ENCODE measurements at regions of chr12 and their contacts with region 1.

Region 1: DNA sequence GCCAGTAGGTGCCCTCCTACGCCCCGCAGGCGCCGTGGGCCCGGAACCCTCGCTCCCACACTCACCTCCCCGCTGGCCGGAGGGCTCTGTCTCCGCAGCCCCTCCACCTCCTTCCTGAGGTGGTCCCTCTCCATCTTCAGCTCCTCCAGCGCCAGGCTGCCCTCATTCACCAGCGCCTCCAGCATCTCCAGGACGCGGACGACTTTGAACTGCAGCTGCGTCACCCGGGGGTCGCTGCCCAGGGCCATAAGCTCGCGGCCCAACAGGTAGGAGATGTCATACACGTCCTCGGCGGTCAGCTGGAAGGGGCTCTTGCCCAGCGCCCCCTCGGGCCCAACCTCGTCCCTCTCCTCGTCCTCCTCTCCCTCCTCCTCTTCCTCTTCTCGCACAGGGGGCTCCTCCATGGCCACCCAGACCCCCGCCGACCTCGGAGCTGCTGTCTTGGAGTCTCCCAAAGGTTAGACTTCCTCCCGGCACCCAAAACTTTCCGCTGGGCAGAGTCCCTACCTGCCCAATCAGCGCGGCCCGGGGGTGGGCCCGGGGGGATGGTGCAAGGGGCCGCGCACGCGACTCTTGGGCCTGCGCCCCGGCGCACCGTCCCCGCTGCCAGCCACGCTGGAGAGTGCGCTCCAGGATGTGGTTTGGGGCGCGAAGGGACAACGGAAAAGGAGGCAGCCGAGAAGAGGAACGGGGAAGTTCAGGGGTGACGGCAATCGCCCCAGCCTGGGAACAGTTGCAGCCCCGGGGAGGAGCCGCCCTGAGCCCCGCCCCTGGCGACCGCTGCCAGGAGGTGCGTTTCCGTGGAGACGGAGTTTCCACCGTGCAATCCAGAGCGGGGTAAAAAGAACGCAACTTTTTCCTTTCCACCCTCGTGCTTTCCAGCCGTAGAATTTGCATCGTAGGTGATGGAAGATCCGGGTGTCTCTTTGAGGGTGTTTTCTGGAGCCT is at the start of gene RILPL2:
- DNase-seq: no peak
- ATAC-seq: peak; percentile 98
- H3K4me3 ChIP-seq: peak within 1 kb of the TSS; percentile 71 to 95
- H3K27ac ChIP-seq: peak within 1 kb of the TSS; percentile 77
- H3K4me1 ChIP-seq: no peaks in the 10 kb centered on the region
- H3K27me3 ChIP-seq: no peaks in the 10 kb centered on the region
- CTCF ChIP-seq: no peak
- total RNA-seq, gene RILPL2: 5.4 TPM

Region 2: GRCh38 chr12:123344086-123344485 is 92.2 kb before region 1 on chr12:
- CTCF ChIA-PET with region 1: no interaction called
- POLR2A ChIA-PET with region 1: no interaction called
- in situ Hi-C with region 1: no loop called
- intact Hi-C with region 1: no loop called
- DNase-seq: no peak
- ATAC-seq: no peak
- H3K4me3 ChIP-seq: no peak overlapping the region
- H3K27ac ChIP-seq: no peak overlapping the region
- H3K4me1 ChIP-seq: no peaks in the 10 kb centered on the region
- H3K27me3 ChIP-seq: no peaks in the 10 kb centered on the region
- CTCF ChIP-seq: no peak

Region 3: DNA sequence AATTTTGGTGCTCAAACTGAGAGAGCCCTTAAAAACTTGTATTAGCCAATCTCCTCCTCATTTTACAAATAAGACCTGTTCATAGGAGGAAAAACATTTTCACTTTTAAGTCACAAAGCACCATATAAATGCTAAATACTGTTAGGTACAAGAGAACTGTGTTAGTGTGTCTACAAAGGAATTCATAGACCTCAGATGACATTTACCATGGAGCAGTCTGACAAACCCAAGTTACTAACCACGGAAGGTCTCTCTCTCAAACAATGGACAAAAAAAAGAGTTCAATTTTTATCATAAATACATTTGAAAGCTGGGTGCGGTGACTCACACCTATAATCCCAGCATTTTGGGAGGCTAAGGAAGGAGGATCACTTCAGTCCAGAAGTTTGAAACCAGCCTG is 81.7 kb before region 1 on chr12:
- CTCF ChIA-PET with region 1: no interaction called
- POLR2A ChIA-PET with region 1: interaction called, 17 read pairs
- in situ Hi-C with region 1: no loop called
- intact Hi-C with region 1: no loop called
- DNase-seq: no peak
- ATAC-seq: no peak
- H3K4me3 ChIP-seq: no peak overlapping the region
- H3K27ac ChIP-seq: no peak overlapping the region
- H3K4me1 ChIP-seq: peaks cover 12% of the 10 kb centered on the region; the same call in 1 of the 2 replicates
- H3K27me3 ChIP-seq: no peaks in the 10 kb centered on the region
- CTCF ChIP-seq: no peak

Region 4: GRCh38 chr12:123398550-123399254 is 37.6 kb before region 1 on chr12:
- CTCF ChIA-PET with region 1: no interaction called
- POLR2A ChIA-PET with region 1: no interaction called
- in situ Hi-C with region 1: no loop called
- intact Hi-C with region 1: no loop called
- DNase-seq: no peak
- ATAC-seq: peak; percentile 23; the same call in 1 of the 2 replicates
- H3K4me3 ChIP-seq: no peak overlapping the region
- H3K27ac ChIP-seq: no peak overlapping the region
- H3K4me1 ChIP-seq: no peaks in the 10 kb centered on the region
- H3K27me3 ChIP-seq: no peaks in the 10 kb centered on the region
- CTCF ChIP-seq: no peak

Region 5: DNA sequence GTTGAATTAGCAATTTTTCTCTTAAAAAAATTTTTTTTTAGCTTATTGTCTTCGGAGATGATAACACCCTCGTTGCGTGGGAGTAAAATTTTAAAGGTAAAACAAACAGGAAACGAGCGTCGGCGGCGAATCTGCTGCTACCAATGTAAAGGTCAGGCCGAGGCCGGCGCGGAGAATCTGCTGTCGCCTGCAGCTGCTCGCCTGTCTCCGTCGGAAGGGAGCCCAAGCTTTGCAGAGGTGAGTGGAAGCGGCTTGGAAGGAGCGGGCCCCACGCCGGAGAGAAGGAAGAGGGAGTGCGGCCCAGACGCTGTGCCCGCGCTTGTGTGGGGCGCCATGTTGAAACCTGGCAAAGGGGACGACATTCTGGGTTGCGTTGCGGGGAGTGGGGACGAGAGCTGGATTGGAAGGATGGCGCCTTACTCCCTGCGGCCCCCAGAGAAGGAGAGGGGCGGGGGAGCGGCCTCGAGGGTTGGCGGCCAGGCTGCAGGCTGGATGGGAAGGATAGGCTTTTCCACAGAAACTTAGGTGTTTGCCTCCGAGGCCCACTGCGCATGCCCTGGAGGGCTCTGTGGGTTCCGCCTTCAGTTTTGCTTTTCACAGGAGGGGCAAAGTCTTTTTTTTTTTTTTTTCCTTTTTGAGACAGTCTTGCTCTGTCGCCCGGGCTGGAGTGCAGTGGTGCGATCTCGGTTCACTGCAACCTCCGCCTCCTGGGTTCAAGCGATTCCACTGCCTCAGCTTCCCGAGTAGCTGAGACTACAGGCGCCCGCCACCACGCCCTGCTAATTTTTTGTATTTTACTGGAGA is 21.9 kb after region 1 on chr12 and contains the start of gene SNRNP35:
- CTCF ChIA-PET with region 1: no interaction called
- POLR2A ChIA-PET with region 1: interaction called, 10 read pairs
- in situ Hi-C with region 1: no loop called
- intact Hi-C with region 1: no loop called
- DNase-seq: no peak
- ATAC-seq: peak; percentile 92
- H3K4me3 ChIP-seq: peak within 1 kb of the TSS; percentile 65 to 68
- H3K27ac ChIP-seq: peak within 1 kb of the TSS; percentile 86
- H3K4me1 ChIP-seq: no peaks in the 10 kb centered on the region
- H3K27me3 ChIP-seq: no peaks in the 10 kb centered on the region
- CTCF ChIP-seq: no peak
- total RNA-seq, gene SNRNP35: 16.5 TPM

Region 6: DNA sequence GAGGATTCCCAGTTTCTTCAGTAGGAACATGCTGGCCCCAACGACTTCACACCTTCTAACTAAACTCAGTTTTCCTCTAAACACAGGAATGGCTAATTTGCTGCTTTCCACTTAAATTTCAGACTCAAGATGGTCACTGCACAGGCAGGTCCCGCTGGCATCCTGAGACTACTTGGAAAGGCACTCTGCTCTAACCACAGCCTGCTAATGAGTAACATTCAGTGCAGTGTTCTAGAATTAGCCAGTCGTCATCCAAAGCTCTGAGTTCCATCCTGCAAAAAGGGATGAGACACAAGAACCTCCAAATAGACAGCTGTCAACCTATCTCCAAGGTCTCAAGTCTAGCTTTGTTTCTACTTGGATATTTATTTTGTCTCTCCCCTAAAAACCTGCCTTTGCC is 530.3 kb after region 1 on chr12:
- CTCF ChIA-PET with region 1: no interaction called
- POLR2A ChIA-PET with region 1: no interaction called
- in situ Hi-C with region 1: no loop called
- intact Hi-C with region 1: no loop called
- DNase-seq: no peak
- ATAC-seq: no peak
- H3K4me3 ChIP-seq: no peak overlapping the region
- H3K27ac ChIP-seq: no peak overlapping the region
- H3K4me1 ChIP-seq: peaks cover 3% of the 10 kb centered on the region; the same call in 1 of the 2 replicates
- H3K27me3 ChIP-seq: no peaks in the 10 kb centered on the region
- CTCF ChIP-seq: no peak